Ascending aorta (tissue), 2 donors: ENCODE measurements at regions of chr4 and their contacts with region 1.

Region 1: DNA sequence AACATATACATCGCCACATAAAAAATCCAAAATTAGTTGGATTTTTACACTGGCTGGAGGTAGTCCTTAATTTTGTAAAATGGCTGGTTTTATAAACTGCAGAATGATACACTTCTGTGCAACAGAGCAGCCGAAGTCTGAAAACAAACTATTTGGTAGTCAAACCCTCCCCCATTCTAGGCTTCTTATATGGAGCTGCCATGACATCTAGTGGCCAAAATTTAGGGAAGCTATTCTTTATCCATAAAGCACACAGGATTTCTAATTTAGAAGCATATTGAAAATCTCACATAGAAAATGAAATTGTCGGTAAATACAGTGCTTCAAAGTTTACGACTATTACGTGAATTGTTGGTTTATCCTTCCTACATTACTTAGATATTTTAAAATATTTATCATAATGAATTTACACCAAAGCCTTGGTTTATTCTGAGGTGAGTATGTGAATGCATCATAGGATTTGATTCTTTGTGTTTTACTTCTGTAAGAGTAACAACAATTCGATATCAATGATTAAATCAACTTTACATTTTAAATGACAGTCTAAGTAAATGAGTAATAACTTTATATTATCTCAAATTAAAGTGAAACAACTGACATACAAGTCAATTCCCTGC is 113.4 kb upstream of the FAM241A start:
- DNase-seq: no peak
- H3K4me3 ChIP-seq: no peak overlapping the region
- H3K27ac ChIP-seq: no peak overlapping the region
- H3K4me1 ChIP-seq: no peaks in the 10 kb centered on the region
- H3K27me3 ChIP-seq: no peaks in the 10 kb centered on the region
- CTCF ChIP-seq: peak; percentile 25 to 49 (median 31)

Region 2: DNA sequence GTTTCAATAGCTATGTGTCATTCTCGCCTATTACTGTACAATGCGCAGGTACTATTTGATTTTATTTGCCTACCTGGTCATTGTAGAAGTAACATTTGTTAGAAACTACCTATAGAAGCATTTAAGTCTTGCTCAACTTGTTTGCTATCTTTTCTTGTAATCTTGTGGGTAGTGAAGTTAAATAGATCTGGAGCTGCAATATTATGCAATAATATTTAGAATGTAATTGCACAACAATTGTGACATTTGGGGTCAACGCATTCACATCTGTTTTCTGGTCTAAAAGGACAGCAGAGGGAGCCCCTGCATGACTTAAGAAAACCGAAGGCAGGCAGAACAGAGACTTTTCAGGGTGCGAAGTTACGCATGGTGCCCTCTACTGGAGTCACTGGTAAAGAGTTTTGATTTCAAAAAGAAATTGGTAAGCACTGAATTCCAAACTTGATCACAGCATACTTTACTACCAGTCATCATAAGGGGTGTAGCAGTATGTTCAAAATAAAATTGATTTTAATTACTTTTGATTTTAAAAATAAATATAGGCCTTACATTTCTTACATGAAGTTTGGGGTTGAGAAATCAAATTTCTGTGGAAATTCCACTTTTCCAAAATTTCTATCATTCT is 389.8 kb before region 1 on chr4:
- intact Hi-C with region 1: loop called (anchors 5 kb)
- DNase-seq: peak in 1 of 2 donors; percentile 63
- H3K4me3 ChIP-seq: no peak overlapping the region
- H3K27ac ChIP-seq: no peak overlapping the region
- H3K4me1 ChIP-seq: no peaks in the 10 kb centered on the region
- H3K27me3 ChIP-seq: no peaks in the 10 kb centered on the region
- CTCF ChIP-seq: peak in 2 of 3 experiments; percentile 22 to 38

Region 3: GRCh38 chr4:112002248-112002661 is 29.6 kb before region 1 on chr4:
- intact Hi-C with region 1: no loop called
- DNase-seq: no peak
- H3K4me3 ChIP-seq: no peak overlapping the region
- H3K27ac ChIP-seq: no peak overlapping the region
- H3K4me1 ChIP-seq: no peaks in the 10 kb centered on the region
- H3K27me3 ChIP-seq: no peaks in the 10 kb centered on the region
- CTCF ChIP-seq: no peak